Mammary epithelial cell (primary cell): ENCODE measurements at regions of chr13 and their contacts with region 1.

Region 1: DNA sequence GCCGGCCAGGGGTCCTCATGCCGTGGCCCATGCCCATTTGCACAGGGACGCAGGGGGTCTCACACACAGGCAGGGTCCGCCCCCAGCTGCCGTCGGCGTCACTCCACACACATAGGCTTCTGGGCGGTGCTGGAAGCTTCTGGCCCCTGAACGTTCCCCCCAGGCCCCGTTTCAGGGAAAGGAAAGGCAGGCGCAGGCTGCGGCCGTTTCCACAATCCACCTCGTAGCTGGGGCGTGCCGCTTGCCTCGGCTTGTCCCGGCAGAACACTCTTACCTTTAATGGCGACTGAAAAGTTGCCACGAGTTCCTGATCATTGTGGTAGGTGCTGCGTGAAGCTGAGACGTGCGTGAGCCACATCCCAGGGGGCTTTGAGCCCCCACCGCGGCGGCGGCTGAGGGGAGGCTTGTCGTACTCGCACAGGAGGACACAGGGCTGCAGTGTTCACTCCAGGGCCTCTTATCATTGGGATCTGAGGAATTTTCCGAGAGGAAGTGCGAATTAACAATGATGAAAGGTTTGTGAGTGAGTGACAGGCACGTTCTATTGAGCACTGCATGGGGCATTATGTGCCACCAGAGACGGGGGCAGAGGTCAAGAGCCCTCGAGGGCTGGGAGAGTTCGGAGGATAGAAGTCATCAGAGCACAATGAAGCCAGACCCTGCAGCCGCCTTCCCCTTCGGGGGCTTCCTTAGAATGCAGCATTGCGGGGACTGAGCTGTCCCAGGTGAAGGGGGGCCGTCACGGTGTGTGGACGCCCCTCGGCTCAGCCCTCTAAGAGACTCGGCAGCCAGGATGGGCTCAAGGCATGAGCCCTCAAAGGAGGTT is 53.6 kb downstream of the MCF2L start:
- DNase-seq: no peak
- H3K4me3 ChIP-seq: no peak overlapping the region
- H3K27ac ChIP-seq: no peak overlapping the region
- H3K4me1 ChIP-seq: peaks cover 11% of the 10 kb centered on the region
- H3K27me3 ChIP-seq: no peaks in the 10 kb centered on the region
- CTCF ChIP-seq: no peak

Region 2: DNA sequence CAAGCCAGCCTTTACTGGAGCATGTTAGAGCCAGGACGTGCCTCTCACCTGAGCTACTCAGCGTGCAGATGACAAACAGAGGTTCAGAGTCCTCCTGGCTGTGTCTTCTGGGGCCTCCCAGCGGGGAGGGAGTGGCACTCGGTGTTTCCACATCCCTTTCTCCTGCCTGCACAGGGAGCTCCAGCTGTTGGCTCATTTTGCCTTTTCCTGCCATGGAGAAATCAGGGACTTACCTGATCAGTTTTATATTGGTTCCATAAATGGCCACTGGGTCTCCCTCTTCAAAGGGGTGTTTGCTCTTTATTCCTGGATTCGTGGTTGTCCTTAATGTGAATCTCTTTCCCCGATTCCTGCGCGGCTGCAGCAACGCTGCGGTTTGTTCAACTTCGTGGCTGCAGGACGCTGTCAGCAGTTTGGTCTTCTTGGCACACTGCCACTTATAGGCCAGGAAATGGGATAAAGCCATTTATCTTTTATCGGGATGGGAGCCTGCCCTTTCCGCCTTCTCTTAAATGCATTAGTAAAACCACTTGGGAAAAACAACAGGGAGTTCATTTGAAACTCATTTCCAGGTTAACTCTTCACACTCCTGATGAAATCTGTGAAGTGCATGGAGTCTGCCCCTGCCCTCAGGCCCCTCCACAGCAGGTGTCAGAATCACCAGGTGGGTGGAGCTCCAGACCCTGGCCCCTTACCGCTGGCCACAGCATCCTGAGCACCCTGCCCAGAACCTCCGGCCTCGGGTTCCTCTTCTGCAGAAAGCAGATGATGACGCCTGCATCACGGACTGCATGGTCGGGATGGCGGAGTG is 93.4 kb before region 1 on chr13:
- CTCF ChIA-PET with region 1: no interaction called
- dilution Hi-C with region 1: no loop called
- in situ Hi-C with region 1: no loop called
- intact Hi-C with region 1: no loop called
- DNase-seq: no peak
- H3K4me3 ChIP-seq: no peak overlapping the region
- H3K27ac ChIP-seq: no peak overlapping the region
- H3K4me1 ChIP-seq: peaks cover 10% of the 10 kb centered on the region
- H3K27me3 ChIP-seq: no peaks in the 10 kb centered on the region
- CTCF ChIP-seq: no peak

Region 3: GRCh38 chr13:112969692-112970338 is 52.8 kb before region 1 on chr13:
- CTCF ChIA-PET with region 1: no interaction called
- dilution Hi-C with region 1: loop called (anchors 5 kb)
- in situ Hi-C with region 1: no loop called
- intact Hi-C with region 1: no loop called
- DNase-seq: no peak
- H3K4me3 ChIP-seq: no peak overlapping the region
- H3K27ac ChIP-seq: no peak overlapping the region
- H3K4me1 ChIP-seq: peaks cover 8% of the 10 kb centered on the region
- H3K27me3 ChIP-seq: peaks cover 23% of the 10 kb centered on the region
- CTCF ChIP-seq: no peak

Region 4: DNA sequence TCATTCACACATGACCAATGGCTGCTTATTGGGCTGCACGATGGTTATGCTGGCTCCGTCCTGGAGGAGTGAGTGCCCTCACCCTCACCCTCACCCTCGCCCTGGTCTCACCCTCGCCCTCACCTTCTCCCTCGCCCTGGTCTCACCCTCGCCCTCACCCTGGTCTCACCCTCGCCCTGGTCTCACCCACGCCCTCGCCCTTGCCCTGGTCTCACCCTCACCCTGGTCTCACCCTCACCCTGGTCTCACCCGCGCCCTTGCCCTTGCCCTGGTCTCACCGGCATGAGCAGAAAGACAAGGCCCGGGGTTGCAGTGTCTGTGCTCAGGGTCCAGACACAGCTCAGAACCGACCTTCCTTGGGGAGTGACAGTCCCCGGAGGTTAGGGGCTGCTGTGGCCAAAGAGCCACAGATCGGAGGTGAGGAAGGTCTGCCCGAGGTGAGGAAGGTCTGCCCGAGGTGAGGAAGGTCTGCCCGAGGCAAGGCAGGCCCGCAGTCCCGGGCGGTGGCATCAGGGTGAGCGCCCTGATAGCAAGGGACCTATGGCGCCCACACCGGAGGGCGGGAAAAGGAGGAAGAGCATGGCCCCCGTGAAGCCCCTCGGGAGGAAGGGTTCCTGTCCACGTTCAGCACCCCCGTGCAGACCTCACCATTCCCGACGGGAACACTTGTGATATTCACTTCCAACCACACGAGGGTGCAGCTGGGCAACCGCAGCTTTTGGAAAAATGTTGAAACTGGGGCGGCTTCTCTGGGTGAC is 12.0 kb after region 1 on chr13:
- CTCF ChIA-PET with region 1: no interaction called
- dilution Hi-C with region 1: no loop called
- in situ Hi-C with region 1: no loop called
- intact Hi-C with region 1: no loop called
- DNase-seq: peak; percentile 40
- H3K4me3 ChIP-seq: no peak overlapping the region
- H3K27ac ChIP-seq: no peak overlapping the region
- H3K4me1 ChIP-seq: no peaks in the 10 kb centered on the region
- H3K27me3 ChIP-seq: no peaks in the 10 kb centered on the region
- CTCF ChIP-seq: peak; percentile 47 to 72